OCI-LY7 (cell line): ENCODE measurements at regions of chr10 and their contacts with region 1.

Region 1: DNA sequence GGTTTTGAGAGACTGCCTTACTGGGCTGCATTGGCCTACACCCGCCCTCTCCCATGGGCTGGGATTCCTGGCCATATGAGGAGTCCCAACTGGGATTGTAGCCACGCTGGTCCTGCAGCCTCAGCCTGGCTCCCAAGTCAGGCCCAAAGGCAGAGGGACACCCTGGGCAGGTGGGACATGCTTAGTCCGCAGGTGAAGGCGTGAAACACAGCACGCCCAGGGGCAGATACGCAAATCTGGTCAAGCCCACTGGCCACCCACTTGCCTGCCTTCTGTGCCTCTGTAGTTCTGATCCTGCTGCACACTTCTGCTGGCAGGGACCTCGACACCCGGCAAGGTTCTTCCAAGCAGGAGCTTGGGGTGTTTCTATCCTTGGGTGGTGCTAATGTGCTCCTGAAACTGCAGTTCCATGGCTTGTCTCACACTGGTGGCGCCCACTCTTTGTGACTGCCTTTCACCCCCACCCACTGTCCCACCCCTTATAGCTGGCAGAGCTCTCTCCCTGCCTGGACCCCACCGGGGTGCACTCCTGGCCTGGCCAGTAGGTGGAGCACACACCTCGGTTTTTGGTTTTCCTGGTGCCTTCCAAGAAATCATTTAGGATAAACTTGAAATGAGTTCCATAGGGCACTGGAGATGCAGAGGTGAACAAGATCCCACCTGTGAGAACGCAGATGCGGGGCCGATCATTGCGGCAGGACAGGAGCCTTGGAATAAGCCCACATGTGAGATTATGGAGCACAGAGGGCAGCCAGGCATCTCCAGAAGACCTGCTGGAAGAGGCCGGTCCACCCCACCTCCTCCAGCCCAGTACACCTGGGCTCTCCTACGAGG is 47.9 kb downstream of the MKI67 start:
- DNase-seq: peak; percentile 37
- H3K4me3 ChIP-seq: no peak overlapping the region
- H3K27ac ChIP-seq: no peak overlapping the region
- H3K4me1 ChIP-seq: no peaks in the 10 kb centered on the region
- CTCF ChIP-seq: peak; percentile 86

Region 2: DNA sequence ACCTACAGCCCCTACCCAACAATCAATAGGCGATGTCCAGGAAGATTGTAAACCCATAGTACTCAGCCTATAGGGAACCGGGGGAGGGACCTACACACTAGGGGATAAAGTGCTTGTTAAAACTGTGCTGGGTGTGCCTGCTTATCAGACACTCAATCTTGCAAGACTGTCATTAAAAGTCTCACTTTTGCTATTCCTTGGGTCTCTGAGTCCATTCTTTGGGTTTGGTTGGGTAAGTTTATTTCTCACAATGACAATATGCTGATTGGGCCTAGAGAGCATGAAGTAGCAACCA is 125.8 kb before region 1 on chr10:
- CTCF ChIA-PET with region 1: no interaction called
- POLR2A ChIA-PET with region 1: no interaction called
- intact Hi-C with region 1: no loop called
- DNase-seq: no peak
- H3K4me3 ChIP-seq: no peak overlapping the region
- H3K27ac ChIP-seq: no peak overlapping the region
- H3K4me1 ChIP-seq: no peaks in the 10 kb centered on the region
- CTCF ChIP-seq: no peak

Region 3: DNA sequence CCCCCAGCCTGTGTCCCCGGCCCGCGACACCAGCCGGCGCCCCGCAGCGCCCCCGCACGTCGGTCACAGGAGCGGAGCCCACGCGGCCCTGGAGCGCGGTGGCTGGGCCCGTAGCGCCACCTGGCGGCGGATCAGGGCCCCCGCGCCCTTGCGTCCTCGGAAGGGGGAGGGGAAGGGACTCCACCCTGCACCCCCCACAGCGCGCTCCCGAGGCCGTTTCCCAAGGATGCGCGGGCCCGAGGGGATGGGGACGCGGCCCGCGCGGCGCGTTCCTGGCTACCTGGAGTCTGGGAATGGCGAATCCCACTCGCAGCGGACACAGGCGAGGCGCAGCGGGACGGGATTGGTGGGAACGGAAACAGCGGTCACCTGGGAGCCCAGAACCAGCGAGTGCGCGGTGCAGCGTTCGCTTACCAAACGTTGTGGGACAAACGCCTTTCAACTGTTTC is 71.7 kb after region 1 on chr10:
- CTCF ChIA-PET with region 1: no interaction called
- POLR2A ChIA-PET with region 1: no interaction called
- intact Hi-C with region 1: loop called (anchors 1 kb)
- DNase-seq: peak; percentile 69
- H3K4me3 ChIP-seq: peak overlapping the region; percentile 41
- H3K27ac ChIP-seq: no peak overlapping the region
- H3K4me1 ChIP-seq: peaks cover 10% of the 10 kb centered on the region
- CTCF ChIP-seq: peak; percentile 78